K562 (cell line): ENCODE measurements at regions of chr1 and their contacts with region 1.

Region 1: GRCh38 chr1:203117611-203118575 is 9.6 kb upstream of the ADORA1 start:
- DNase-seq: peak; percentile 78 to 96 (median 94)
- ATAC-seq: peak; percentile 100
- H3K4me3 ChIP-seq: no peak overlapping the region
- H3K27ac ChIP-seq: no peak overlapping the region
- H3K4me1 ChIP-seq: peaks cover 0 to 5% of the 10 kb centered on the region in 2 experiments; a peak in 1 of 5 replicates
- H3K27me3 ChIP-seq: peaks cover 12 to 58% of the 10 kb centered on the region in 2 experiments; a peak in 4 of 5 replicates
- CTCF ChIP-seq: peak; percentile 87 to 92 (median 89)
- EP300 ChIP-seq: no peak
- POLR2A ChIP-seq: no peak
- RAD21 ChIP-seq: peak; percentile 94 to 96

Region 2: GRCh38 chr1:203172128-203173010 is 54.5 kb after region 1 on chr1:
- CTCF ChIA-PET with region 1: interaction called, 27 read pairs
- POLR2A ChIA-PET with region 1: interaction called, 3 read pairs
- in situ Hi-C with region 1: no loop called
- intact Hi-C with region 1: loop called (anchors 1 kb)
- DNase-seq: peak; percentile 78 to 92 (median 88)
- ATAC-seq: peak; percentile 93
- H3K4me3 ChIP-seq: no peak overlapping the region
- H3K27ac ChIP-seq: no peak overlapping the region
- H3K4me1 ChIP-seq: peaks cover 0 to 11% of the 10 kb centered on the region in 2 experiments; a peak in 1 of 5 replicates
- H3K27me3 ChIP-seq: peaks cover 14 to 68% of the 10 kb centered on the region in 2 experiments; a peak in 4 of 5 replicates
- CTCF ChIP-seq: peak; percentile 92 to 97 (median 93)
- EP300 ChIP-seq: no peak
- POLR2A ChIP-seq: no peak
- RAD21 ChIP-seq: peak; percentile 78 to 86